BJ (cell line): ENCODE measurements at regions of chr17 and their contacts with region 1.

Region 1: DNA sequence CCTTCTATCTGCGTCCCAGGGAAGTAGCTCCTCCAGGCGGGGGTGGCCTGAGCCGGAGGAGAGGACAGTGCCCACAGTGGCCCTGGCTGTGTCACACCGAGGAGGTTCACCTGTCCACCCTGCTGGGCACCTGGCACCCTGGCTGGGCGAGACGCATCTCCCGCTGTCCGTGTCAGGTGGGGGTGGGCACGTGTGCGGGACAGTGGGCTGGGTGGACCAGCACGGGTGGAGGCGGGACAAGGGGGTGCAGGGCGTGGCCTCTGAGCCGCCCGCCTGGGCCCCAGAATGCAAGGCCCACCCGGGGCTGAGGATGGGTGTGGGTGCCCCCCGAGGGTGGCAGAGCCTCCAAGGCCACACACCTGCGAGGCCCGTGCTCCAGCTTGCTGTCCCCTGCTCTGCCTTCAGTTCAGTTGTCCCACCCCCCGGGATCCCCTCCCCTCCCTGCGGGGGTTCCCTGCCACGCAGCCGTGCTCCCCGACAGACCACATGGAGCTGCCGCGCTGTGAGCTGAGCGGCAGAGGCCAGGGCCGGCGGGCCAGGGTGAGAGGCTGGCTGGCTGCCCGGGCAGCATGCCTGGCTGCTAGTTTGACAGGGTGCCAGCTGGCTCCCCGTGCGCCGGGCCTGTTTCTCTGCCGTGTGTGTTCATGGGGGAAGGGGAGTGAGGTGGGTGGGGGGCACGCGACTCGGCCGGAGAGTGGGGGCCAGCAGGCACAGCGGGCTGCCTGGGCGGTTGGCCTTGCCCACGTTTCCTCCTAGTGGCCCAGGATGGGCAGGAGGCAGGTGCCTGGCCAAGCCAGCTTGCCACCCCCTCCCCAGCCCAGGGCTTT is 33.9 kb downstream of the BAHCC1 start:
- DNase-seq: no peak
- H3K4me3 ChIP-seq: no peak overlapping the region
- H3K27me3 ChIP-seq: no peaks in the 10 kb centered on the region
- CTCF ChIP-seq: no peak

Region 2: DNA sequence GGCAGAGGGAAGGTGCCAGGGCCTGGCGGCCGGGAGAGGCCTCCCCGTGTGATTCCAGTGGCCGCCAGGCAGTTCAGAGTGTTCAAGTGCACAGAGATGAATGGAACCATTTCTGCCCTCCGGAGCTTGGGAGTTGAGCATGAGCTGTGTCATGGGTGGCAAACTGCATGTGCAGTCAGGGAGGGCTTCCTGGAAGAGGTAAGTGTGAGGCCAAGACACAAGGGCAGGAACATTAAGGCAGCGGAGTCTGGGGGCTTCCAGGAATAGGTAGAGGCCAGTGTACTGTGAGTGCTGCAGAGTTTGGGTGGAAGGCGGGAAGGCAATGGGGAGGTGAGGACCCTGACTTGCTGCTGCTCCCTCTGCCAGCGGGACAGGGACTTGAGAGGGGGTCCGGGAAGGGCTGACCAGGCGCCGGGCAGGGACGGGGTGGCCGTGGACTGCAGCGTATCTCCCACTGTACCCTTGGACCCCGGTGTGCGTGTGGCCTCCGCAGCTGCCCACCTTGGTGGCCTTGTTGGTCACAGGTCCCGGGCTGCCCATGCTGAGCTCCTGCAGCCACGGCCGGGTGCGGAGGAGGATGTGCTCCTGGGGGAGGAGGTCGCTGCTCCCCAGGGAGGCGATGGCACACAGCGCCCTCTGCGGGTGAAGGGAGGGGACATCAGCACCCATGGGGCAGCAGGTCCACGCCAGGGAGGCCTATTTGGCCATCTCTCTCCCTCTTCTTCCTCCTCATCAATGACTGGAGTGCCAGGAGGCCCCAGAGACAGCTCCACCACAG is 198.9 kb before region 1 on chr17:
- CTCF ChIA-PET with region 1: no interaction called
- POLR2A ChIA-PET with region 1: no interaction called
- DNase-seq: no peak
- H3K4me3 ChIP-seq: no peak overlapping the region
- H3K27me3 ChIP-seq: no peaks in the 10 kb centered on the region
- CTCF ChIP-seq: peak; percentile 36

Region 3: DNA sequence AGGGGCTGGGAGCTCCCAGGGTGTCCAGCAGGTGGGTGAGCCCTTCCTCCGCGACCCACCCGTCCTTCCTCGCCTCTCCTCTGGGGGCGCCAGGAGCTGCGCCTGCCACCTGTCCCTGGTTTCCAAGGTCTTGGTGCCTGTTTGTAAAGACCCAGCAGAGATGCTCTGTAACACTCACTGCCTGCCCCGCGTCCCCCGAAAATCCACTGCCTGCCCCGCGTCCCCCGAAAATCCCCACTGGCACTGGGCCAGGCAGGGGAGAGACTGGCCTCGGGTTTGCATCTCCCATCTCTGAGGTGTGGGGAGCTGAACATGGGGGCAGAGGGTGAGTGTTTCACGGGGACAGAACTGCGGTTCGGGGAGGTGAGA is 11.7 kb after region 1 on chr17:
- CTCF ChIA-PET with region 1: interaction called, 14 read pairs
- POLR2A ChIA-PET with region 1: no interaction called
- DNase-seq: no peak
- H3K4me3 ChIP-seq: no peak overlapping the region
- H3K27me3 ChIP-seq: no peaks in the 10 kb centered on the region
- CTCF ChIP-seq: peak; percentile 59